ENCODE measurements at regions of chr12 and their contacts with region 1.

Region 1: DNA sequence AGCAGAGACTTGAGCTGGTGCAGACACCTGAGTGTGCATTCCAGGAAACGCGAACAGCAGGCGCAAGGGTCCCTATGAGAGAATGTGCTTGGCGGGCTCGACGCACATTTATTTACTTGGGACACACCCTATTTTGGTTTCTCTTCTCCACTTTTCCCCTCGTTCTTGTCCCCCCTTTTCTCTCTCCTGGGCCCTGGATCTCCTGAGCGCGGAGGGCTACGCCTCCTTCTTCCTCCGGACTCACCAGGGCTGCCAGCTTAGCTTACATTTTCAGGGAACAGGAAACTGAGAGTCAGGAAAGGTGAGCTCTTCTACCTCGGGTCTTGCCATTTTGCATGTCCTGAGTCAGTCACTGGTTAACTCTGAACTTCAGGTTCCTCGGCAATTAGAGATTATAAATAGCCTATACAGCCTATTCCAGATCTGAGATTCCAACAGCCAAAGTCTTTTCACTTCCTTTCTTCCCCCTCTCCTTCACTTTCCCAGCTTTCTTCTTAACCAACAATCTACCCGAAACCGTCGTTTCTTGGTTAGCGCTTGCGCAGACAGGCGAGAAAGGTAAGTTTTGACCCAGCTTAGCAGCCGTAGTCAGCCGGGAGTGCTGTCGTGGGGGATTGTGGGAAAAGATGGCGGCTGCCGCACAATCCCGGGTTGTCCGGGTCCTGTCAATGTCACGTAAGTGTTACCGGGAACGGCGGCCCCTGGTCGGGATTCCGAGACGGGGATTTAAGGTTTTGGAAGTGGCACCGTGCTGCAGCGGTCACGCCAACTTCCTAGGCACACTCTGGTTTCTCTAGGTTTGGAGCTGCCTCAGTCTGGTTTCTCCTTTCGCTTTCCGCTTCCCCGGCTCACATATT is at the starts of genes AKAP3 and NDUFA9:
- DNase-seq: peak; percentile 81
- H3K4me3 ChIP-seq: peak within 1 kb of the TSS; percentile 84
- H3K27ac ChIP-seq: peak within 1 kb of the TSS; percentile 59
- H3K4me1 ChIP-seq: peaks cover 47% of the 10 kb centered on the region
- CTCF ChIP-seq: no peak
- total RNA-seq, gene AKAP3: 0.92 and 1.2 TPM in 2 replicates
- total RNA-seq, gene NDUFA9: 69.1 and 72.0 TPM in 2 replicates

Region 2: DNA sequence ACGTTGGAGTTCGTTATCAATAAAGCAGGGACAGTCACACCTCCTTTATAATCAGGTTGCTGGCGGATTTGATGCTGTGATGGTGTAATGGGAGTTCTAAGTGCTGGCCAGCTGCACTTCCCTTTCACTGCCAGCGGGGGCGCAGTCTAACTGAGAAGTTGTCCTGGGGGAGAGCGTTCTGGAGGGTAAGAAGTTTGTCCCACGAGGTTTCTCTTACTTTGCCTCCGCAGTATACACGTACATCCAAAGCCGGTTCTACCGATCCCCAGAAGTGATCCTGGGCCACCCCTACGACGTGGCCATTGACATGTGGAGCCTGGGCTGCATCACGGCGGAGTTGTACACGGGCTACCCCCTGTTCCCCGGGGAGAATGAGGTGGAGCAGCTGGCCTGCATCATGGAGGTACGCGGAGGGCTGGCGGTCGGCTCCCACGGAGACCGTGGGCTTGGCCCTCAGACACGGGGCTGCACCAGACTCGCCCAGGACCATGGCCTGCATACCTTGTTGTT is 44.0 kb before region 1 on chr12:
- CTCF ChIA-PET with region 1: no interaction called
- POLR2A ChIA-PET with region 1: interaction called, 4 read pairs
- intact Hi-C with region 1: loop called (anchors 2 kb)
- DNase-seq: peak; percentile 89
- H3K4me3 ChIP-seq: peak overlapping the region; percentile 83
- H3K27ac ChIP-seq: no peak overlapping the region
- H3K4me1 ChIP-seq: no peaks in the 10 kb centered on the region
- CTCF ChIP-seq: peak; percentile 97

Region 3: GRCh38 chr12:4829161-4829792 is 180.5 kb after region 1 on chr12:
- CTCF ChIA-PET with region 1: no interaction called
- POLR2A ChIA-PET with region 1: interaction called, 5 read pairs
- intact Hi-C with region 1: loop called (anchors 2 kb)
- DNase-seq: peak; percentile 90
- H3K4me3 ChIP-seq: peak overlapping the region; percentile 82
- H3K27ac ChIP-seq: peak overlapping the region; percentile 98
- H3K4me1 ChIP-seq: peaks cover 54% of the 10 kb centered on the region
- CTCF ChIP-seq: no peak

Measured in OCI-LY7 (cell line).